Activated T-helper 1 cell treated with anti-CD3 and anti-CD28 coated beads, Interleukin-12 subunit alpha, Interleukin-12 subunit beta, Interleukin-2, Interleukin-4 antibody, amounts not matched to agents 30 ng/mL and 10 ng/mL and 1 ng/mL, durations not matched to agents 14 hours and 24 hours and 36 hours (primary cell): ENCODE measurements at regions of chr1 and their contacts with region 1.

Region 1: GRCh38 chr1:117967477-117967876 is 37.9 kb downstream of the WDR3 start:
- DNase-seq: no peak
- H3K4me3 Mint-ChIP-seq: no peak overlapping the region
- H3K27ac Mint-ChIP-seq: no peak overlapping the region
- H3K4me1 Mint-ChIP-seq: peaks cover 13% of the 10 kb centered on the region
- H3K27me3 Mint-ChIP-seq: no peaks in the 10 kb centered on the region

Region 2: DNA sequence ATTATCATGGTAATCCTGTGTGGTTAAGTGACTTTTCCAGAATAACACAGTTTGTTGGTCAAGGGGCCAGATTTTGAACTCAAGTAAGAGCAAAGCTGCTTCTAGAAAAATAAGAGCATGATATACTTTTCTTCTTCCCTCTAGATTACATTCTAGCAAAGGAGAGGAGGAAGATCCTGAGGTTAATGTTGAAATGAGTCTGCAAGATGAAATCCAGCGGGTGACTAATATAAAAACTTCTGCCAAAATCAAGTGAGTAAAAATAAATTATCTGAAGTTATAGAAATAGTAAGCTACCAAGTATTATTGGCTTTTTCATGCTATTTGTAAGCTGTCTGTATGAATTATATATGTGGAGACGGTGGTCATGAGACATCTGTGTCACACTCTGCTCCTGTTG is 25.2 kb before region 1 on chr1:
- intact Hi-C with region 1: loop called (anchors 2 kb)
- DNase-seq: no peak
- H3K4me3 Mint-ChIP-seq: no peak overlapping the region
- H3K27ac Mint-ChIP-seq: no peak overlapping the region
- H3K4me1 Mint-ChIP-seq: peaks cover 6% of the 10 kb centered on the region
- H3K27me3 Mint-ChIP-seq: no peaks in the 10 kb centered on the region

Region 3: DNA sequence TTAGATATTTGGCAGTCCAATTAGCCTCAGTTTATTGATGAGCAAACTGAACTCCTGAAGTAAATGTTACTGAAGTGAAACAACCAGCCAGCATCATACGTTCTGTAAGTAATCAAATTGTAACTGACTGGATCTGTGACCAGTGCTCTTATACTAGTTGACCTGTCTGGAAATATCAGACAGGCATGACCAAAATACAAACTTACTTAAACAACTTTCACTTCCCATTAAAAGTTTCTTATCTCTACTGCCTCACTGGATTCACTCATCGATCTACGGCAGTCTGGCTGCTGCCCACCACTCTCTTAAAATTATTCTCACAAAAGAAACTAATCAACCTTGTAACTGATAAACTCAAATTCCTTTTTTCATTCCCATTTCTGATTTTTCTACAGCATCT is 18.5 kb after region 1 on chr1:
- intact Hi-C with region 1: no loop called
- DNase-seq: no peak
- H3K4me3 Mint-ChIP-seq: no peak overlapping the region
- H3K27ac Mint-ChIP-seq: no peak overlapping the region
- H3K4me1 Mint-ChIP-seq: no peaks in the 10 kb centered on the region
- H3K27me3 Mint-ChIP-seq: peaks cover 9% of the 10 kb centered on the region